GM18951 (cell line): ENCODE measurements at regions of chr10 and their contacts with region 1.

Region 1: GRCh38 chr10:31340343-31340742 is 21.3 kb downstream of the ZEB1 start:
- POLR2A ChIP-seq: no peak

Region 2: DNA sequence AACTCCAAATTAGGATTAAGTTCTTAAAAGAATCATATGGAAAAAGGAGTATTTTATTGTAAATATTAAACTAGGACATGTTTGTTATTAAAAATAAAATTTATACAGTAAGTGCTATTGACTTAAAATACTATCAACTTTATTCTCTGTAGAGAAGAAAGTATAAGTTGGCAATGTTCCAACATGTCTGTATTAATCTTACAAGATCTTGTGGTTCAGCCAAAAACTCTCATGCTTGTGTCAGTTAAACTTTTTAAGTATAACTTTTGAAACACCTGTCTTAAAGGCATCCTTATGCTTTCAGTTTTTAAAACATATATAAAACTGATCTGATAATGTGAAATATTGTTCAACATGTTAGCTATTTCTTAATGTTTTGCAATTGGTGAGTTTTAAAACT is 139.4 kb after region 1 on chr10:
- in situ Hi-C with region 1: no loop called
- POLR2A ChIP-seq: no peak

Region 3: GRCh38 chr10:31759799-31760626 is 419.7 kb after region 1 on chr10:
- in situ Hi-C with region 1: loop called (anchors 25 kb)
- POLR2A ChIP-seq: peak; percentile 68